Mammary epithelial cell (primary cell): ENCODE measurements at regions of chr2 and their contacts with region 1.

Region 1: GRCh38 chr2:218216674-218217359 is at the start of gene ARPC2:
- DNase-seq: peak; percentile 91
- H3K4me3 ChIP-seq: peak within 1 kb of the TSS; percentile 84 to 92 (median 91)
- H3K27ac ChIP-seq: peak within 1 kb of the TSS; percentile 84
- H3K4me1 ChIP-seq: peaks cover 29% of the 10 kb centered on the region
- H3K27me3 ChIP-seq: no peaks in the 10 kb centered on the region
- CTCF ChIP-seq: no peak
- total RNA-seq, gene ARPC2: 523 to 644 TPM

Region 2: DNA sequence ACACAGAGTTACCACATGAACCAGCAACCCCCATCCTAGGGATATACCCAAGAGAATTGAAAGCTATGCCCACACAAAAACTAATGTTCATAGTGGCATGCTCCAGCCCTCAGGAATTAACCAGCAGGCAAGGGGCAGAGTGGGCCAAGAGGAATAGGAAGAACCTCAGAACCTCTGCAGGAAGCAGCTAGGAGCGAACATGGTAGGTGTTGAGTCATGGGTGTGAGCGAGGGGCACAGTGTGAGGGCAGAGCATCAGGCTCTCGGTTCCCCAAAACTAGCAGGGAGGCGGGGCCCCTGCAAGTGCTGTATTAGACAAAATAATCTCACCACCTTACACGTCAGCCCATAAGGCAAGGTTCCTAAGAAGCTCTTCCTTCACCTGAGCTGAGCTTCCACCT is 153.3 kb before region 1 on chr2:
- CTCF ChIA-PET with region 1: no interaction called
- dilution Hi-C with region 1: no loop called
- in situ Hi-C with region 1: no loop called
- intact Hi-C with region 1: no loop called
- DNase-seq: no peak
- H3K4me3 ChIP-seq: no peak overlapping the region
- H3K27ac ChIP-seq: no peak overlapping the region
- H3K4me1 ChIP-seq: no peaks in the 10 kb centered on the region
- H3K27me3 ChIP-seq: peaks cover 2% of the 10 kb centered on the region
- CTCF ChIP-seq: no peak

Region 3: DNA sequence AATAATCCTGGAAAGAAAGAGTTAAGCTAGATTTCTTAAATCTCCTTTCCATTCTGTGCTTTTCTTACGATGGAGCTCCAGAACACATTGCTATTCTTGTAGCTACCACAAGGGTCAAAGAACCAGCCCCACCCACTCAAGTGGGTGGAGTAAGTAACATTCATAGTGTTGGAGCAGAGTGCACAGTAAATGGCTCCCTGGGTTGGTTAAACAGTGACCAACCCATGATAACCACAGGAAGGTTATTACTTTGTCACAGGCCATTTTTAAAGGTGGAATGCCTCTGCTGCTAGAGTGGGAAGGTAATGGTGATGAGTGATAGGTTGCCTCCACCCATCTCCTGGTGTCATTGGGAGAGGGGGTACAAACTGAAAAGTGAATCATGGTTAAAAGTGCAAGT is 14.1 kb after region 1 on chr2:
- CTCF ChIA-PET with region 1: no interaction called
- dilution Hi-C with region 1: no loop called
- in situ Hi-C with region 1: no loop called
- intact Hi-C with region 1: loop called (anchors 1 kb)
- DNase-seq: peak; percentile 48
- H3K4me3 ChIP-seq: no peak overlapping the region
- H3K27ac ChIP-seq: peak overlapping the region; percentile 30
- H3K4me1 ChIP-seq: peaks cover 31% of the 10 kb centered on the region
- H3K27me3 ChIP-seq: no peaks in the 10 kb centered on the region
- CTCF ChIP-seq: peak; percentile 23 to 34

Region 4: DNA sequence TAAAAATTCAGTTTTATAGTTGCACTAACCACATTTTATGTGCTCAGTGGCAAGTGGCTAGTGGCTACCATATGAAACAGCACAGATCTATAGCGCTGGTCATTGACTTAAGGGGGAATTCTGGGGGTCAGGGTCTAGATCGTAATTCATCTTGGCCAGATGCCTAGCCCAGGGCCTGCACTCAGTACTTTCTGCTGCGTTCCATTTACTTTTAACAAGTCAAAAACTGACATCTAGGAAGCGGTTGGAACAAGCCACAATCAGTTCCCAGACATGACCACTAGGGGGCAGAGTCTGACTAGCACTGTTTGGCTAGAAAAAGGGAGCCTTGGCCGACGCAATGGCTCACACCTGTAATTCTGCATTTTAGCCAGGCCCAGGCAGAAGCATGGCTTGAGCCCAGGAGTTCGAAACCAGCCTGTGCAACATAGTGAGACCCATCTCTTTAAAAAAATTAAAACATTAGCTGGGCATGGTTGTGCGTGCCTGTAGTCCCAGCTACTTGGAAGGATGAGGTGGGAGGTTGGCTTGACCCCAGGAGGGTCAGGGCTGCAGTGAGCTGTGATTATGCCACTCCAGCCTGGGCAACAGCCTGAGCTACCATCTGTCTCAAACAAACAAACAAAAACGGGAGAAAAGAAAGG is 84.5 kb after region 1 on chr2:
- CTCF ChIA-PET with region 1: no interaction called
- dilution Hi-C with region 1: no loop called
- in situ Hi-C with region 1: no loop called
- intact Hi-C with region 1: no loop called
- DNase-seq: peak; percentile 74
- H3K4me3 ChIP-seq: no peak overlapping the region
- H3K27ac ChIP-seq: no peak overlapping the region
- H3K4me1 ChIP-seq: peaks cover 24% of the 10 kb centered on the region
- H3K27me3 ChIP-seq: no peaks in the 10 kb centered on the region
- CTCF ChIP-seq: peak; percentile 94